Ascending aorta (tissue), 2 donors: ENCODE measurements at regions of chr6 and their contacts with region 1.

Region 1: GRCh38 chr6:35601331-35602132 is 87.2 kb downstream of the FKBP5 start:
- DNase-seq: peak; percentile 45 to 88
- H3K4me3 ChIP-seq: peak overlapping the region; percentile 41 to 51
- H3K27ac ChIP-seq: peak overlapping the region; percentile 95 to 97
- H3K4me1 ChIP-seq: peaks cover 24 to 78% of the 10 kb centered on the region in 2 donors
- H3K27me3 ChIP-seq: no peaks in the 10 kb centered on the region
- CTCF ChIP-seq: no peak

Region 2: DNA sequence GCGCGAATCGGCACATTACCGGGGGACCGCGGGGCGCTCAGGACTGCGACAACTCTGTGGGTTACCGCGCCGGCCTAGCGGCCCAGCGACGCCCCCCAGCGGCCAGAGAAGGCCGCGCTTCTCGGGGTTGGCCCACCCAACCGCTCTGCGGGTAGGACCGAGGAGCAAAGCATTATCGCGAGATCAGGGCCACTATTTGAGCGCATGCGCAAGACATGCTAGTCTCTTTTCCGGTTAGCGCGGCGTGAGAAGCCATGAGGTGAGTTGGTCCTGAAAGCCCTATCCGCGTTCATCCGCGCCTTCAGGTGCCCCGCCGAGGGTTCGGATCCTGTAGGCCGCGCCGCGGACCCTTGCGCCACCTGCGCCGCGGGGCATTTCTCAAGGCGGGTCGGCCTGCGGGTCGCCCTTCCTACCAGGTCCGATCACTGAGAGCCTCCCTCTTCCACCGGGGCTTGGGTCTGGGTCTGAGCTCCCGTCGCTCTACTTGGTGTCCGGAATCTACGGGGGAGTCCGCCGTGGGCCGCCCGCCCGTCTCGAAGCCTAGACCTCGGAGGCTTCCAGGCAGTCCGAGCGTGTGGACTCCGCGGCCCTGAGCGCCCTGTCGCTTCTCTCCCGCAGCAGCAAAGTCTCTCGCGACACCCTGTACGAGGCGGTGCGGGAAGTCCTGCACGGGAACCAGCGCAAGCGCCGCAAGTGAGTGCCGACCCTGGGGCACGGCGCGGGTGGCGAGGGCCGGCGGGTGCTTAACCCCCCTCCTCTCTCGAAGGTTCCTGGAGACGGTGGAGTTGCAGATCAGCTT is 133.2 kb before region 1 on chr6 and contains the start of gene RPL10A:
- intact Hi-C with region 1: no loop called
- DNase-seq: peak; percentile 82 to 97
- H3K4me3 ChIP-seq: peak within 1 kb of the TSS; percentile 72 to 78
- H3K27ac ChIP-seq: peak within 1 kb of the TSS; percentile 84 to 88
- H3K4me1 ChIP-seq: peaks cover 5 to 19% of the 10 kb centered on the region in 2 donors
- H3K27me3 ChIP-seq: no peaks in the 10 kb centered on the region
- CTCF ChIP-seq: peak; percentile 97 to 98 (median 98)
- total RNA-seq, gene RPL10A: 643 TPM

Region 3: GRCh38 chr6:35590622-35591066 is 10.9 kb before region 1 on chr6:
- intact Hi-C with region 1: loop called (anchors 1 kb)
- DNase-seq: peak in 1 of 2 donors; percentile 84
- H3K4me3 ChIP-seq: no peak overlapping the region
- H3K27ac ChIP-seq: peak overlapping the region; percentile 84 to 94
- H3K4me1 ChIP-seq: peaks cover 37 to 69% of the 10 kb centered on the region in 2 donors
- H3K27me3 ChIP-seq: no peaks in the 10 kb centered on the region
- CTCF ChIP-seq: no peak